Ovary (tissue), 10 donors: ENCODE measurements at regions of chr10 and their contacts with region 1.

Region 1: GRCh38 chr10:22969704-22970103 is 41.9 kb downstream of the ARMC3 start:
- DNase-seq: no peak
- H3K4me3 ChIP-seq: no peak overlapping the region
- H3K27ac ChIP-seq: no peak overlapping the region
- H3K4me1 ChIP-seq: no peaks in the 10 kb centered on the region
- H3K27me3 ChIP-seq: no peaks in the 10 kb centered on the region
- CTCF ChIP-seq: no peak
- EP300 ChIP-seq: no peak
- POLR2A ChIP-seq: no peak

Region 2: DNA sequence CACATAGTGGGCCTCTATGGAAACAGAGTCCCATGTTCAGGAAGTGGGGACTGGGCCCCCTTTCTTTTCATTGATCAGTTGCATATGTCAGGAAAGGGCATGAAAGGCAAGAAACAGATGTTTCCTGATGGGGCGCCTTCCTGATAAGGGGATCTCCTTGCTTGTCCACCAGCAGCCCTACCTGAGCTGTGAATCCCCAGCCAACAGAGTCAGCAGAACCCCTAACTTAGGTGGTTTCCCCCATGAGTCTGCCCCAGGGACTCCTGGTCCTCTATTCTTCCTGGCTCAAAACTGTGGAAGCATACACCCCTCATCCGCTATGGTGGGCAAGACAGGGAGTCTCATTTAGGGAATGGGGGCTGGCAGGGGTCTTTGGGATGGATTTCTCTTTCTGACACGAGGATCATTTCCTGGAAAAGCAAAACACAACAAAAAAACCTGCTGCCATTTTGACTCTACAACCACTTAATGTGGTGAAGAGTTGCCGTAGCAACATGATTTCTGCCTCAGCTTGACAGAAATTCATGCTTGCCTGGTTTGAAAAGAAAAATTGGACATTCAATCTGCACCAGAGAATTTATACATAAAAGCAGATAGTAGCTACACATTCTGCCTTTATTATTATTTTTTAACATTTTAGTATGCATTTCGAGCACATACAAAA is 504.6 kb before region 1 on chr10:
- intact Hi-C with region 1: loop called in 1 of 4 experiments (anchors 5 kb)
- DNase-seq: no peak
- H3K4me3 ChIP-seq: no peak overlapping the region
- H3K27ac ChIP-seq: no peak overlapping the region
- H3K4me1 ChIP-seq: no peaks in the 10 kb centered on the region
- H3K27me3 ChIP-seq: no peaks in the 10 kb centered on the region
- CTCF ChIP-seq: no peak
- EP300 ChIP-seq: no peak
- POLR2A ChIP-seq: no peak

Region 3: GRCh38 chr10:23095404-23095965 is 125.8 kb after region 1 on chr10 and contains the start of gene MSRB2:
- intact Hi-C with region 1: no loop called
- DNase-seq: peak; percentile 91 to 96 (median 94)
- H3K4me3 ChIP-seq: peak within 1 kb of the TSS; percentile 84
- H3K27ac ChIP-seq: peak within 1 kb of the TSS; percentile 93 to 95
- H3K4me1 ChIP-seq: peaks cover 6% of the 10 kb centered on the region
- H3K27me3 ChIP-seq: no peaks in the 10 kb centered on the region
- CTCF ChIP-seq: no peak
- EP300 ChIP-seq: no peak
- POLR2A ChIP-seq: peak; percentile 84
- total RNA-seq, gene MSRB2: 16.5 to 35.8 (median 33.1) TPM